Vagina (tissue), 2 donors: ENCODE measurements at regions of chr7 and their contacts with region 1.

Region 1: GRCh38 chr7:5694912-5695726 is 86.3 kb downstream of the RNF216 start:
- DNase-seq: no peak
- H3K4me3 ChIP-seq: peak overlapping the region; percentile 13 to 28
- H3K27ac ChIP-seq: peak overlapping the region; percentile 83
- H3K4me1 ChIP-seq: peaks cover 78% of the 10 kb centered on the region
- H3K27me3 ChIP-seq: no peaks in the 10 kb centered on the region
- CTCF ChIP-seq: no peak
- POLR2A ChIP-seq: peak in 1 of 2 donors; percentile 36

Region 2: GRCh38 chr7:5423844-5424688 is 271.1 kb before region 1 on chr7:
- intact Hi-C with region 1: loop called (anchors 5 kb)
- DNase-seq: peak in 1 of 2 donors; percentile 98
- H3K4me3 ChIP-seq: peak overlapping the region; percentile 81 to 97
- H3K27ac ChIP-seq: peak overlapping the region; percentile 100
- H3K4me1 ChIP-seq: peaks cover 16% of the 10 kb centered on the region
- H3K27me3 ChIP-seq: no peaks in the 10 kb centered on the region
- CTCF ChIP-seq: no peak
- POLR2A ChIP-seq: peak in 1 of 2 donors; percentile 54

Region 3: GRCh38 chr7:5677538-5678294 is 17.4 kb before region 1 on chr7:
- intact Hi-C with region 1: no loop called
- DNase-seq: no peak
- H3K4me3 ChIP-seq: no peak overlapping the region
- H3K27ac ChIP-seq: no peak overlapping the region
- H3K4me1 ChIP-seq: peaks cover 19% of the 10 kb centered on the region
- H3K27me3 ChIP-seq: no peaks in the 10 kb centered on the region
- CTCF ChIP-seq: peak; percentile 26 to 74 (median 51)
- POLR2A ChIP-seq: no peak

Region 4: GRCh38 chr7:5769571-5769970 is 74.5 kb after region 1 on chr7:
- intact Hi-C with region 1: loop called (anchors 2 kb)
- DNase-seq: no peak
- H3K4me3 ChIP-seq: no peak overlapping the region
- H3K27ac ChIP-seq: no peak overlapping the region
- H3K4me1 ChIP-seq: peaks cover 31% of the 10 kb centered on the region
- H3K27me3 ChIP-seq: no peaks in the 10 kb centered on the region
- CTCF ChIP-seq: no peak
- POLR2A ChIP-seq: no peak

Region 5: GRCh38 chr7:6338551-6339274 is 643.6 kb after region 1 on chr7:
- intact Hi-C with region 1: no loop called
- DNase-seq: no peak
- H3K4me3 ChIP-seq: no peak overlapping the region
- H3K27ac ChIP-seq: no peak overlapping the region
- H3K4me1 ChIP-seq: no peaks in the 10 kb centered on the region
- H3K27me3 ChIP-seq: no peaks in the 10 kb centered on the region
- CTCF ChIP-seq: no peak
- POLR2A ChIP-seq: no peak